ENCODE measurements at regions of chr11 and their contacts with region 1.

Region 1: DNA sequence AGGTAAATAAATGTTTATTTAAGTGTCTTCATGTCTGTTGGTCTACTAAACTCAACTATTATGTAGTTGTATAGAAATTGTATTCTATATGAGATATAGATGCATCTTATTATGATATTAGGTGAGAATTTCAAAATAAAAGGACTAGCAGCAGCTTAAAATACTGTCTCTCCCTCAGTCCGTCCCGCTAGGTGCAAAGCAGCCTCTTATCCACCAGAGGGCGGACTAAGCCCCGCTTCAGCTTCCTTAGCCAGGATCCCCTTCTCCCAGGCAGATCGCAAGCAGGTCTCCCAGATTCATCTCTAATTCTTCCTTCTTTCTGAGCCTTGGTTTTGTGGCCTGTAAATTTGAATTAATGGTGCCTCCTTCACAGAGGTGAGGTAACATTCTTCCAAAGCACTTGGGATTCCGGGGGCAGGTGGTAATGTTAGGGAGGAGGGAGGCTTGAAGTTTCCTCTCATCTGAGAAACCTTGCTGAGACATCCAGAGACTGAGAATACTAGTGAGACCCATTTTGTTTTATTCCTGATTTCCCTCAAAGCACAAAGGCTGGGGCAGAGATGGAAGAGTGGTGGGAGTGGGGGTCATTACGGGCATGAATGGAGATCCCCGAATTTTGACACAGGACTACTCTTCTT is 13.5 kb upstream of the INSC start:
- DNase-seq: no peak
- H3K4me3 ChIP-seq: no peak overlapping the region
- CTCF ChIP-seq: peak; percentile 88

Region 2: GRCh38 chr11:14907411-14908213 is 193.6 kb before region 1 on chr11:
- CTCF ChIA-PET with region 1: interaction called, 17 read pairs
- POLR2A ChIA-PET with region 1: no interaction called
- DNase-seq: no peak
- H3K4me3 ChIP-seq: no peak overlapping the region
- CTCF ChIP-seq: peak; percentile 68

Region 3: DNA sequence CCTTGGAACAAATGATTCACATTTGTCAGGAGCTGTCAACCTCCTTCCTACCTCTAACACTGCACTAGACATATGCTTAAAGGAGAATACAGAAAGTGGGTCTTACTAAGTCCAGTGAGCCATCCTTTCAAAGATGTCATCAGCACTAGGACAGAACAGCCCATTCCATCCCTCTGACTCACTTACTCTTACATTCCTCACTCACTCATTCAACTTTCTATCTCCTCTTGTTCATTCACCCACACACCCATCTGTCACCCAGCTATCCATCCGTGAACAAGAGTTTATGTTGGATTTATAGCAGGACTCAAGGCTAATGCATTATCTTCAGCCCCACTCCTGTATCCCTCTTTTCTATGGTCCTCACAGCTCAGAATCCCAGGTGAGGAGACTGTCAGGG is 22.7 kb after region 1 on chr11:
- CTCF ChIA-PET with region 1: interaction called, 35 read pairs
- POLR2A ChIA-PET with region 1: interaction called, 4 read pairs
- DNase-seq: peak; percentile 51
- H3K4me3 ChIP-seq: no peak overlapping the region
- CTCF ChIP-seq: no peak

Region 4: GRCh38 chr11:15159085-15159484 is 57.9 kb after region 1 on chr11:
- CTCF ChIA-PET with region 1: interaction called, 203 read pairs
- POLR2A ChIA-PET with region 1: no interaction called
- DNase-seq: no peak
- H3K4me3 ChIP-seq: no peak overlapping the region
- CTCF ChIP-seq: peak; percentile 55

Region 5: DNA sequence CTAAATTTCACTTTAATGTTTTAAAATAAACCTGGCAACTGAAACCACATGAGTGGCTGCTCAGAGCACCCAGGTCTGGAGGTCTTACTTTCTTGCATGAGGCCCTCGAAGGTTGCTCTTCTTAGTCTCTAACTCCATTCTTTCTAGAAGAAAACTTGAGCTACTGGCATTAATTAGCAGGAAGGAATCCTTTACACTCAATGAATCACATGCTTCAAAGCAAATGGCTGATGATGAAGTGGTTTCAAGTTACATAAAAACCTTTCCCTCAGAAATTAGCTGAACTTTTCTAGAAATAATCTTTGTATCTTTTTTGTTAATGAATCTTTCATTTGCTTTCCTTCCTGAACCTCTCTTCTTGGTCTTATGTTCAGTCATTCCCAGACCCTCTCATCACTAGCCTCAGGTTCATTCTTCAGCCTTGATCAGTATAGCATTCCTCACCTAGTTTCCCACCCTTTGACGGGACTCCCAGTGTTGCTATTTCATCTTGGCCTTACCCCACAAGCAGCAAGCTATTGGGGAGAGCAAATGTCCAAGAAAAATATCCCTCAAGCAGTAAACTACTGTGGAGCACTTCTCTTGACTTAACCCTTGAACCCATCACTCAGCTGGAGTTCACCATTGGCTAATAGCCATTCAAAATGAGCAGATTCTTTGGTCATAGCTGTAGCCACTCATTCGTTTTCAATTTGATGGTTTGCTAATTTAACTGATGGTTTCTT is 88.6 kb after region 1 on chr11:
- CTCF ChIA-PET with region 1: interaction called, 11 read pairs
- POLR2A ChIA-PET with region 1: no interaction called
- DNase-seq: no peak
- H3K4me3 ChIP-seq: no peak overlapping the region
- CTCF ChIP-seq: no peak

Region 6: GRCh38 chr11:15208378-15209222 is 107.4 kb after region 1 on chr11:
- CTCF ChIA-PET with region 1: interaction called, 373 read pairs
- POLR2A ChIA-PET with region 1: no interaction called
- DNase-seq: no peak
- H3K4me3 ChIP-seq: no peak overlapping the region
- CTCF ChIP-seq: peak; percentile 95

Region 7: DNA sequence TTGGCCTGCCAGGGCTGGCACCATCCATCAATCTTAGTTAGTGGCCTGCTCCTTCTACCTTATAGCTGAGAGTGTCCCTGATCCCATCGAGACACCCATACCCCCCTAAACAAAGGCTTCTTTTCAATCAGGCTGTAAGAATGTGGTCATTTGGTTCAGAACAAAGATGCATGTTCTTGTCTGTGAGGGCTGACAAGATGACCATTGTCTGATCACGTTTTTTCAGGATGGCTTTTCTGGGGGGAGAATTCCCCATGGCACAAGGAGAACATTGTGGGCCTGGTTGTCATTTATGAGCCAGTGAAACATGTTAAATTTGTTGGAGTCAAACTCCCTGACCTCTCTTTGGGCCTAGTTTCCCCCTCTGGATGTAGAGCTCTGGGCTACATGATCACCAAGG is 173.9 kb after region 1 on chr11:
- CTCF ChIA-PET with region 1: no interaction called
- POLR2A ChIA-PET with region 1: no interaction called
- DNase-seq: no peak
- H3K4me3 ChIP-seq: no peak overlapping the region
- CTCF ChIP-seq: no peak

Measured in AG04449 (cell line).